PC-3 (cell line): ENCODE measurements at regions of chr18 and their contacts with region 1.

Region 1: DNA sequence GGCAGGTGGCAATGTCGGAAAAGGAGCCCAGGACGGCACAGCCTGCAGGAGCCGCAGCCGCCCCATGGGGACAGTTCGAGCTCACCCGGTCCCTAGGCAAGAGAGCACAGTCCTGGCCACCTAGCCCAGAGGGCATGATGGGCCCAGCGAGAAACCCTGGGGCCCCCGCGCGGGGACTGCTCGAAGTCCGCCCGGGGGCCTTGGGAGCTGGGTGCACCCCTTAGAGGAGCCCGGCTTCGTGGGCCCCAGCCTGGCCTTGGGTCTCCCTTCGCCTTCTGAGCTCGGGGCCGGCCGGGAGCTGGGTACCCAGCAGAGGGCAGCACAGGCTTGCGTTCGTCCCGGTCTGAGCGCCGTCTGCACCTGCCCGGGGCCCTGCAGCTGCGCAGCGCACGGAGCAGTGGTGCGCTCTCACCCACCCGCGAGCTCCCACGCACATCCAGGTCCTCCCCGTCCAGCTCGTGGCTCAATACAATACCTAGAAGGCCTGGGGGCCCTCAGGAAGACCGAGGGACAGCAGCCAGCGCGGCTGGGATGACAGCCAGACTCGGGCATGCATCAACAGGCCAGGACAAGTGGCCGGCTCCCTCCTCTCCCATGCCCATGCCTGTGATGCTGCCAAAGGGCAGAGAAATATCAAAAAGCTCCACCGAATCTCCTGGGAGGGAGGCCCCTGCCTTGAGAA is 96.2 kb upstream of the ZNF532 start:
- DNase-seq: peak; percentile 74
- ATAC-seq: peak; percentile 98
- H3K4me3 ChIP-seq: peak overlapping the region; percentile 67
- H3K27ac ChIP-seq: no peak overlapping the region
- H3K4me1 ChIP-seq: 0 out of 2 replicates have a peak, but pooled peaks cover 3% of the 10 kb centered on the region
- H3K27me3 ChIP-seq: no peaks in the 10 kb centered on the region
- CTCF ChIP-seq: peak; percentile 87

Region 2: GRCh38 chr18:58400337-58400870 is 368.0 kb before region 1 on chr18:
- CTCF ChIA-PET with region 1: no interaction called
- POLR2A ChIA-PET with region 1: no interaction called
- intact Hi-C with region 1: loop called (anchors 2 kb)
- DNase-seq: no peak
- ATAC-seq: no peak
- H3K4me3 ChIP-seq: no peak overlapping the region
- H3K27ac ChIP-seq: no peak overlapping the region
- H3K4me1 ChIP-seq: no peaks in the 10 kb centered on the region
- H3K27me3 ChIP-seq: no peaks in the 10 kb centered on the region
- CTCF ChIP-seq: 0 out of 2 replicates have a peak, but pooled peaks have one; percentile 5

Region 3: GRCh38 chr18:58529714-58530354 is 238.6 kb before region 1 on chr18:
- CTCF ChIA-PET with region 1: interaction called, 24 read pairs
- POLR2A ChIA-PET with region 1: interaction called, 3 read pairs
- intact Hi-C with region 1: loop called (anchors 1 kb)
- DNase-seq: peak; percentile 71
- ATAC-seq: peak; percentile 75
- H3K4me3 ChIP-seq: no peak overlapping the region
- H3K27ac ChIP-seq: no peak overlapping the region
- H3K4me1 ChIP-seq: no peaks in the 10 kb centered on the region
- H3K27me3 ChIP-seq: no peaks in the 10 kb centered on the region
- CTCF ChIP-seq: peak; percentile 97

Region 4: DNA sequence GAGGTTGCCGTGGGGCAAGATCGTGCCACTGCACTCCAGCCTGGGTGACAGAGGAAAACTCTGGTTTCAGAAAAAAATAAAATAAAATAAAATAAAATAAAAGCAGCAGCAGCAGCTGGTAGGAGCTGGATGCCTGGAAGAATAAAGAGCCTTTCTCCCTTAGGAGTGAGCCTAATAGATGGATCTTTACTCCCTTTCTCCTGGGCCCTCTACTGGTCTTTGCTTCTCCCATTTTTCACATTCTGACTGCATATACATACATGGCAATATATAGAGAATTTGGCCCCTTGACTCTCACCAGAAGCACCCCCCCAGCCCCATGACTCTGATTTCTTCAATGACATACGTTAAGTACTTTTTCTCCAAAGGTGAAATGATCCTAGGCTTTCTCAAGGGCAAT is 107.0 kb before region 1 on chr18:
- CTCF ChIA-PET with region 1: interaction called, 3 read pairs
- POLR2A ChIA-PET with region 1: no interaction called
- intact Hi-C with region 1: loop called (anchors 1 kb)
- DNase-seq: peak; percentile 20
- ATAC-seq: peak; percentile 46
- H3K4me3 ChIP-seq: no peak overlapping the region
- H3K27ac ChIP-seq: no peak overlapping the region
- H3K4me1 ChIP-seq: peaks cover 13% of the 10 kb centered on the region
- H3K27me3 ChIP-seq: no peaks in the 10 kb centered on the region
- CTCF ChIP-seq: no peak

Region 5: GRCh38 chr18:58800582-58800981 is 32.1 kb after region 1 on chr18:
- CTCF ChIA-PET with region 1: no interaction called
- POLR2A ChIA-PET with region 1: no interaction called
- intact Hi-C with region 1: no loop called
- DNase-seq: no peak
- ATAC-seq: no peak
- H3K4me3 ChIP-seq: no peak overlapping the region
- H3K27ac ChIP-seq: no peak overlapping the region
- H3K4me1 ChIP-seq: no peaks in the 10 kb centered on the region
- H3K27me3 ChIP-seq: no peaks in the 10 kb centered on the region
- CTCF ChIP-seq: no peak

Region 6: DNA sequence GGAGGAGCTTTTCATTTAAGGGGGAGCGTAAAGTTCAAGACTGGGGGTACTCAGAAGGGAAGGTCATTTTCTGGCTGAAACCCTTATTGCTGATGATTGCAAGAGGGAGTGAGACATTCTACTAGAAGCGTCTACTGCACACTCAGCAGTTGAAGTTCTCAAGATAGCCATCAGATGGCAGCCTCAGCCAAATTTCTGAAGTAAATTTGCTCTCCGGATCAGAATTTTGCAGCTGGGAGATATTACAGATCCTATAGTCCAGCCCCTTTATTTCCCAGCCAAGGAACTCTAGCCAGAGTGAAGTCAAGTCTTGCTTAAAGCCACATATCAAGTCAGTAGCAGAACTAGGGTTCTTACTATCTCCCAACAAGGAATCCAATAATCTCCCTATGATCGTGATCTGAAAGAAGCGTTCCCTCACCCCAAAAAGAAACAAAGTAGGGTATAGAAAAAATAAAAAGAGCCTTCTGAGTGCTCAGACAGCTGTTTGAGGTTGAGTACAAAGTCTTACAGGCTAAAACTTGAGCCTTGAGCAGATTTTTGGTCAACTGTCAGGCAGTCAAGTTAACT is 480.9 kb after region 1 on chr18:
- CTCF ChIA-PET with region 1: no interaction called
- POLR2A ChIA-PET with region 1: no interaction called
- intact Hi-C with region 1: loop called (anchors 10 kb)
- DNase-seq: peak; percentile 90
- ATAC-seq: peak; percentile 98
- H3K4me3 ChIP-seq: no peak overlapping the region
- H3K27ac ChIP-seq: no peak overlapping the region
- H3K4me1 ChIP-seq: no peaks in the 10 kb centered on the region
- H3K27me3 ChIP-seq: peaks cover 48% of the 10 kb centered on the region
- CTCF ChIP-seq: peak; percentile 87